Posterior vena cava (tissue), 2 donors: ENCODE measurements at regions of chr18 and their contacts with region 1.

Region 1: DNA sequence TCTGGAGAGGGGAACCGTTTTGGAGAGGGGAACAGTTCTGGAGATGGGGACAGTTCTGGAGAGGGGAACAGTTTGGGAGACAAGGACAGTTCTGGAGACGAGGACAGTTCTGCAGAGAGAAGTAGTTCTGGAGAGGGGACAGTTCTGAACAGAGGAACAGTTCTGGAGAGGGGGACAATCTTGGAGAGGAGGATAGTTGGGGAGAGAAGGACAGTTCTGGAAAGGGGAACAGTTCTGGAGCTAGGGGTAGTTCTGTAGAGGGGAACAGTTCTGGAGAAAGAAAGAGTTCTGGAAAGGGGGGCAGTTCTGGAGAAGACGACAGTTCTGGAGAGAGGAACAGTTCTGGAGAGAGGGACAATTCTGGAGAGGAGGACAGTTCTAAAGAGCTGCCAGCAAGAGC is 745.9 kb downstream of the GALR1 start:
- DNase-seq: no peak

Region 2: GRCh38 chr18:78069784-78070664 is 74.4 kb after region 1 on chr18:
- intact Hi-C with region 1: loop called in 1 of 2 experiments (anchors 2 kb)
- DNase-seq: peak; percentile 50